Colonic mucosa (tissue), 4 donors: ENCODE measurements at regions of chr14 and their contacts with region 1.

Region 1: GRCh38 chr14:49786315-49787110 is 18.6 kb downstream of the KLHDC2 start:
- DNase-seq: no peak
- H3K4me3 ChIP-seq: no peak overlapping the region
- H3K27ac ChIP-seq: no peak overlapping the region
- H3K4me1 ChIP-seq: no peaks in the 10 kb centered on the region
- H3K27me3 ChIP-seq: no peaks in the 10 kb centered on the region
- CTCF ChIP-seq: no peak

Region 2: GRCh38 chr14:49381778-49382177 is 404.7 kb before region 1 on chr14:
- intact Hi-C with region 1: no loop called
- DNase-seq: no peak
- H3K4me3 ChIP-seq: no peak overlapping the region
- H3K27ac ChIP-seq: no peak overlapping the region
- H3K4me1 ChIP-seq: no peaks in the 10 kb centered on the region
- H3K27me3 ChIP-seq: no peaks in the 10 kb centered on the region
- CTCF ChIP-seq: no peak

Region 3: GRCh38 chr14:49585803-49586672 is 200.5 kb before region 1 on chr14 and contains the start of gene RPS29:
- intact Hi-C with region 1: no loop called
- DNase-seq: peak; percentile 98
- H3K4me3 ChIP-seq: peak within 1 kb of the TSS; percentile 66
- H3K27ac ChIP-seq: peak within 1 kb of the TSS; percentile 88
- H3K4me1 ChIP-seq: no peaks in the 10 kb centered on the region
- H3K27me3 ChIP-seq: no peaks in the 10 kb centered on the region
- CTCF ChIP-seq: no peak
- total RNA-seq, gene RPS29: 1,421 to 1,478 TPM

Region 4: GRCh38 chr14:49828640-49829039 is 42.1 kb after region 1 on chr14:
- intact Hi-C with region 1: loop called (anchors 5 kb)
- DNase-seq: no peak
- H3K4me3 ChIP-seq: no peak overlapping the region
- H3K27ac ChIP-seq: no peak overlapping the region
- H3K4me1 ChIP-seq: no peaks in the 10 kb centered on the region
- H3K27me3 ChIP-seq: no peaks in the 10 kb centered on the region
- CTCF ChIP-seq: no peak